BJ (cell line): ENCODE measurements at regions of chr10 and their contacts with region 1.

Region 1: GRCh38 chr10:34031400-34031799 is 696.9 kb upstream of the NRP1 start:
- DNase-seq: no peak
- H3K4me3 ChIP-seq: no peak overlapping the region
- H3K27me3 ChIP-seq: no peaks in the 10 kb centered on the region; the same call in 1 of the 2 replicates
- CTCF ChIP-seq: no peak

Region 2: GRCh38 chr10:33869028-33869427 is 162.4 kb before region 1 on chr10:
- CTCF ChIA-PET with region 1: no interaction called
- POLR2A ChIA-PET with region 1: no interaction called
- DNase-seq: peak; percentile 46
- H3K4me3 ChIP-seq: no peak overlapping the region
- H3K27me3 ChIP-seq: peaks cover 18% of the 10 kb centered on the region
- CTCF ChIP-seq: no peak

Region 3: GRCh38 chr10:34017281-34017680 is 14.1 kb before region 1 on chr10:
- CTCF ChIA-PET with region 1: interaction called, 14 read pairs
- POLR2A ChIA-PET with region 1: no interaction called
- DNase-seq: no peak
- H3K4me3 ChIP-seq: no peak overlapping the region
- H3K27me3 ChIP-seq: no peaks in the 10 kb centered on the region
- CTCF ChIP-seq: no peak

Region 4: DNA sequence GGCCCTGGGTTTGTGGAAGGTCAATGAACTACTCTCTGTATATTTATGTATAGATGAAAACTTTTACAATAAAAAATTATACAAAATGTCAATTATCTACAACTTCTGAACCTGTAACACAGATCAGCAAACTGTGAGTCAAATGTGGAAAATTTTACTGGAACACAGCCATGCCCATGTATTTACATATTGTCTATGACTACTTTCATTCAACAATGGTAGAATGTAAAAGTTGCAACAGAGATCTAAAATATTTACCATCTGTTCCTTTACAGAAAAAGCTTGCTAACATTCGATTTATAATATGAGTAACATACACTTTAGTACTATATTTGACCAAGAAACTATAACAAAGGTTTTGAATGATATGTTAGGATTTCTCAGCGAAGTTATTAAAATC is 302.1 kb after region 1 on chr10:
- CTCF ChIA-PET with region 1: no interaction called
- POLR2A ChIA-PET with region 1: no interaction called
- DNase-seq: no peak
- H3K4me3 ChIP-seq: no peak overlapping the region
- H3K27me3 ChIP-seq: no peaks in the 10 kb centered on the region
- CTCF ChIP-seq: no peak